ENCODE measurements at regions of chr11 and their contacts with region 1.

Region 1: GRCh38 chr11:77198440-77198849 is 70.4 kb downstream of the MYO7A start:
- DNase-seq: no peak
- ATAC-seq: no peak

Region 2: DNA sequence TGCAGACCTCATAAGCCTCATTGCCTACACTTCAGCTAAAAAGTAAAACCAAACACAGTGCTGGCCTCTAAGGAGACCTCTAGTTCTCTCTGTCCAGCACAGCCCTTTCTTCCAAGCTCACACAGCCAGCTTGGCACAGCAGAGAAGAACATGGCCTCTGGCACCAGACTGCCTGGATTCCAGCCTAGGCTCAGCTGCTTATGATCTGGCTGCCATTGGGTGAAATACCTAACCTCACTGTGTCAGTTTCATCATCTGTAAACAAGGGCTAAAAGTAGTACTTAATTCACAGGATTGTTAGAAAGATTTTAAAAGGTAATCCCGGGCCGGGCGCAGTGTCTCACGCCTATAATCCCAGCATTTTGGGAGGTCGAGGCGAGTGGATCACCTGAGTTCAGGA is 347.6 kb before region 1 on chr11:
- intact Hi-C with region 1: no loop called
- DNase-seq: no peak
- ATAC-seq: peak; percentile 94

Region 3: DNA sequence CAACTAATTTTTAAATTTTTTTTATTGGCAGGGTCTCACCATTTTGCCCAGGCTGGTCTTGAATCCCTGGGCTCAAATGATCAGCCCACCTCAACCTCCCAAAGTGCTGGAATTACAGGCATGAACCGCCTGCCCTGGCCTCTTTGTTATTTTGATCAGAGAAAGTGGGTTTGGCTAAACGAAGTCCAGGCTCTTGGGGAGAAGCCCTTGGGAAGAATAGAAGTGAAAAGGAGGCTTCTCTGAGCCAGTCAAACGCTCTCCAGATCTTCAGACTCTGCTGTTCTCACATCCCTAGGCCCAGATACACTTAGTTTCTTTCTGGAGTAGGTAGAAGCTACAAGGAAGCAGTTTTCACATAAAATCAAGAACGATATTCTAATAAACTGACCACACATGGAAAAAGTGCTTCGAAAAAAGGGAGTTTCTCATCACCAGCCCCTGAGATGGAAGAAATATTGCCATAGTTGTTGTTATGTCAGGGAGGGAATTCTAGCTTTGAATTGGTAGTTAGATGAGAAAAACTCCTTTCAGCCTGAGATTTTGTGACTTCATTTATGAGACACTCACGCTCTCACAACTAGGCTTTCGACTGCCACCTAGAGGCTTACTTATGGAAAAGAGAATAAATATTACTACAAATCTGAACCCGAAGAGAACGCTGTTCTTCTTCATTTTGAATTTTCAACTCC is 349.6 kb after region 1 on chr11:
- intact Hi-C with region 1: loop called (anchors 5 kb)
- DNase-seq: no peak
- ATAC-seq: peak; percentile 46

Measured in Right ventricle myocardium inferior (tissue), 1 donor.